Naive thymus-derived CD4-positive, alpha-beta T cell (primary cell): ENCODE measurements at regions of chr19 and their contacts with region 1.

Region 1: DNA sequence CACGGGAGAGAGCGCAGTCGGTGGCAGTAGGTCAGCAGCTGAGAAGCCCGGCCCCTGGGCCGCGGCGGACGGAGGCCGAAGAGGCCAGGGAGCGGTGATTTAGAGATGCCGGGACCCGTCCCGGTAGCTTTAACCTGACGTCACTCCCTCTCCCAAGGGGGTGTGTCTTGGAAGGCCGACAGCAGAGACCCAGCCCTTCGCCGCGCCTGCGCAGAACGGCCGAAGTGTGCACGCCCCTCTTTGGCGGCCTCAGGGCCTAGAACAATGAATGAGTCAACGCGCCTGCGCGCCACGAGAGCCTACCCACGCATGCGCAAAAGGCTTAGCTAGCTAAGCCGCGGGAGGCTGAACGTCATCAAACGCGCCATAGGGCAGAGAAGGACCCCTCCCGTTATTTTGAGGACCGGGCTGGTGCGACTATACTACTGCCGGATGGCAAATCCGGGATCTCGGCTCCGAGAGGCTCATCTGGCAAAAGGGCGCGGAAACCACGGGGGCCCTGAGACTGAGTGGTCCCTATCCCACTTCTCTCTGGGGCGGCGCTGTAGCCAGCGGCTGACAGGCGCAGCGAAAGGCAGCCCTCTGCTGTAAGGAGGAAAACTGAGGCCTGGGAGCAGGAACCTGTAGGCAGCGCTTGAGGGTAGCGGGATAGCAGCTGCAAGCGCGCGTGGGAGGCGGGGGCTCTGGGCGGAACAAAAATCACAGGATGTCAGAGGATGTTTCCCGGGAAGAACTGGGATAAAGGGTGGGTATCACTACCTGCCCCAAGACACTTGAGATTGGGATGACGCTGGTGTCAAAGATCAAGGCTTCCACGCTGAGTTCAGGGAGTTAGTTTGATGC is at the starts of genes IRGQ and ZNF576:
- DNase-seq: peak; percentile 98 to 100 (median 99)
- ATAC-seq: peak; percentile 88
- H3K4me3 ChIP-seq: peak within 1 kb of the TSS; percentile 81
- H3K4me3 Mint-ChIP-seq: peak within 1 kb of the TSS; percentile 84 to 98 (median 95)
- H3K27ac ChIP-seq: peak within 1 kb of the TSS; percentile 95
- H3K27ac Mint-ChIP-seq: peak within 1 kb of the TSS; percentile 98 to 100 (median 100)
- H3K4me1 ChIP-seq: peaks cover 16 to 28% of the 10 kb centered on the region in 2 donors
- H3K4me1 Mint-ChIP-seq: peaks cover 27 to 47% (median 37%) of the 10 kb centered on the region in 7 donors
- H3K27me3 ChIP-seq: no peaks in the 10 kb centered on the region
- H3K27me3 Mint-ChIP-seq: peaks cover 0 to 4% (median 0%) of the 10 kb centered on the region in 5 donors
- total RNA-seq, gene IRGQ: 13.5 to 43.8 (median 18.9) TPM
- total RNA-seq, gene ZNF576: 9.4 to 20.6 (median 19.5) TPM

Region 2: GRCh38 chr19:43463381-43464136 is 132.7 kb before region 1 on chr19:
- CTCF ChIA-PET with region 1: interaction called, 8 read pairs
- POLR2A ChIA-PET with region 1: interaction called, 4 read pairs
- intact Hi-C with region 1: loop called (anchors 1 to 5 kb)
- DNase-seq: peak; percentile 94 to 100 (median 99)
- ATAC-seq: peak; percentile 92
- H3K4me3 ChIP-seq: peak overlapping the region; percentile 92
- H3K4me3 Mint-ChIP-seq: peak overlapping the region; percentile 87 to 99 (median 94)
- H3K27ac ChIP-seq: peak overlapping the region; percentile 92
- H3K27ac Mint-ChIP-seq: peak overlapping the region; percentile 89 to 100 (median 99)
- H3K4me1 ChIP-seq: peaks cover 8 to 19% of the 10 kb centered on the region in 2 donors
- H3K4me1 Mint-ChIP-seq: peaks cover 24 to 67% (median 51%) of the 10 kb centered on the region in 7 donors
- H3K27me3 ChIP-seq: no peaks in the 10 kb centered on the region
- H3K27me3 Mint-ChIP-seq: peaks cover 0 to 2% (median 0%) of the 10 kb centered on the region in 5 donors

Region 3: DNA sequence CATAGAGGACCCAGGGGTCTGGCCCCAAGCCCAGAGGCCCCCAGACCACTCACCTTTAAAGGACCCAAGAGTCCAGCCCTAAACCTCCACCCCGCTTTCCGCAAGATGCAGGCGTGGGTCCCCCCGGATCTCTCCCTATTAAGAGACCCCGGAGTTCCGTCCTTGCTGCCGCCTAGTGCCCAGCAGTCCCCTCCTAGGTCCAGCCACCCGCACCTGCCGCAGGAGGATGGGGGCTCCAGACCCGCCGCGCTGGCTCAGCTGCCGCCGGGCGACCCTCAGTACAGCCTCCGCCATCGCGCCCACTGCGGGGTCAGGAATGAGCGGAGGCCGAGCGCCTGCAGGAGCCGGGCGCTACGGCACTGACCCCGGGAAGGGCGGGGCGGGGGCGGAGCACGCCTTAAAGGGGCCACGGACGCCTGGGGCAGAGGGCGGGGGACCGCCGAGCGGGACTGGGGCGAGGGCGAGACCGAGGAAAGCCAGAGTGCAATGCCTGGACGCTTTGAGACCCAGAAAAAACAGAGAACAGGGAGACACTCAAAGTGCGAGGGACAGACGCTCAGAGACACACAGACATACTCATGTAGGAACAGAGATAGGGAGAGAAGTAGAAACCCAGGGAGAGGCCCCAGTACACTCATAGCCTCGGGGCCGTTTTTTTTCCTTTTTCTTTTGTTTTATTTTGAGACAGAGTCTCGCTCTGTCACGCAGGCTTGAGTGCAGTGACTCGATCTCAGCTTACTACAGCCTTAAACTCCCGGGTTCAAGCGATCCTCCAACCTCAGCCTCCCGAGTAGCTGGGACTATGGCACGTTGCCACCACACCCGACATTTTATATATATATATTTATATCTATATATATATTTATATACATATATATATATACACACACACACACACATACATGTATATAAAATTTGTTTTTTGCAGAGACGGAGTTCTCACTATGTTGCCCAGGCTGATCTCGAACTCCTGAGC is 69.0 kb before region 1 on chr19 and contains the start of gene ETHE1:
- CTCF ChIA-PET with region 1: interaction called, 6 read pairs
- POLR2A ChIA-PET with region 1: no interaction called
- intact Hi-C with region 1: loop called in 1 of 2 experiments (anchors 1 kb)
- DNase-seq: peak; percentile 39 to 86 (median 50)
- ATAC-seq: peak; percentile 86
- H3K4me3 ChIP-seq: peak within 1 kb of the TSS; percentile 75
- H3K4me3 Mint-ChIP-seq: peak within 1 kb of the TSS; percentile 78 to 94 (median 84)
- H3K27ac ChIP-seq: peak within 1 kb of the TSS; percentile 81
- H3K27ac Mint-ChIP-seq: peak within 1 kb of the TSS; percentile 75 to 96 (median 86)
- H3K4me1 ChIP-seq: peaks cover 15 to 24% of the 10 kb centered on the region in 2 donors
- H3K4me1 Mint-ChIP-seq: peaks cover 18 to 38% (median 25%) of the 10 kb centered on the region in 7 donors
- H3K27me3 ChIP-seq: no peaks in the 10 kb centered on the region
- H3K27me3 Mint-ChIP-seq: no peaks in the 10 kb centered on the region
- total RNA-seq, gene ETHE1: 20.3 to 58.6 (median 23.9) TPM

Region 4: GRCh38 chr19:43562698-43563241 is 33.5 kb before region 1 on chr19:
- CTCF ChIA-PET with region 1: interaction called, 122 read pairs
- POLR2A ChIA-PET with region 1: interaction called, 46 read pairs
- intact Hi-C with region 1: loop called in 1 of 2 experiments (anchors 1 kb)
- DNase-seq: peak; percentile 43 to 83 (median 75)
- ATAC-seq: peak; percentile 91
- H3K4me3 ChIP-seq: peak overlapping the region; percentile 32
- H3K4me3 Mint-ChIP-seq: peak overlapping the region; percentile 63 to 97 (median 87)
- H3K27ac ChIP-seq: peak overlapping the region; percentile 79
- H3K27ac Mint-ChIP-seq: peak overlapping the region; percentile 75 to 99 (median 96)
- H3K4me1 ChIP-seq: peaks cover 31 to 40% of the 10 kb centered on the region in 2 donors
- H3K4me1 Mint-ChIP-seq: peaks cover 33 to 65% (median 63%) of the 10 kb centered on the region in 7 donors
- H3K27me3 ChIP-seq: no peaks in the 10 kb centered on the region
- H3K27me3 Mint-ChIP-seq: no peaks in the 10 kb centered on the region

Region 5: DNA sequence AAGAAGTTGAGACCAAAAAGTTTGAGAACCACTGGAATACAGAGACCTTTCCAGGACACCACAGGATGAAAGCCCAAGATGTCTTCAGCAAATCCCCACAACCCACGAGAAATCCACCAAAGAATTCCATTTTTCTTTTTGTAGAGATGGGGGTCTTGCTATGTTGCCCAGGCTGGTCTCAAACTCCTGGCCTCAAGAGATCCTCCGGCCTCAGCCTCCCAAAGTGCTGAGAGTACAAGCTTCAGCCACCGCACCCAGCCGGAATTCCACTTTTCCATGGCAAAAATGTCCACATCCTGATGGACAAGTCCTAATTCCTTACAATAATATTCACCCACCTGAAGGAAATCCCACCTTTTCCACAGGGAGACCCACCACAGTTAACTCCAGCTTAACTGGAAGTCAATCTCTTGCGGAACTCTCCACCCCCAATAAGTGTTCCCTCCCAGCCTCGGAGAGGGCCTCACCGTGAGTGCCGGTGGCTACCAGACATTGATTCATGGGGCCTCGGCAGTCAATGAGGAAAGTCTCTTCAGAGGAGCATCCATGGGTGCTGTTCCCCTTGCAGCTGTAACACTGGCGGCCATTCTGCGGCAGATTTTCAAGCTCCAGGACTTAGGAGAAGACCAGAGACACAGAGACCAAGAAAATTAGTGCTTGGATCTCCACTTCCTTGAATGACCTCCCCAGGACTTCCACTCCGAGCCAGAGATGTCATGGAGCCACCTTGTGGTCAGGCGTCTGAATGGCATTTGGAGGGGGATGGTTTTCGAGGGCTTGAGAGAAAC is 55.7 kb after region 1 on chr19:
- CTCF ChIA-PET with region 1: no interaction called
- POLR2A ChIA-PET with region 1: no interaction called
- intact Hi-C with region 1: loop called in 1 of 2 experiments (anchors 1 kb)
- DNase-seq: peak in 2 of 9 donors; percentile 28 to 37
- ATAC-seq: peak; percentile 48
- H3K4me3 ChIP-seq: no peak overlapping the region
- H3K4me3 Mint-ChIP-seq: no peak overlapping the region
- H3K27ac ChIP-seq: no peak overlapping the region
- H3K27ac Mint-ChIP-seq: peak overlapping the region in 1 of 9 donors; percentile 9
- H3K4me1 ChIP-seq: no peaks in the 10 kb centered on the region
- H3K4me1 Mint-ChIP-seq: peaks cover 0 to 5% (median 0%) of the 10 kb centered on the region in 7 donors
- H3K27me3 ChIP-seq: no peaks in the 10 kb centered on the region
- H3K27me3 Mint-ChIP-seq: no peaks in the 10 kb centered on the region

Region 6: DNA sequence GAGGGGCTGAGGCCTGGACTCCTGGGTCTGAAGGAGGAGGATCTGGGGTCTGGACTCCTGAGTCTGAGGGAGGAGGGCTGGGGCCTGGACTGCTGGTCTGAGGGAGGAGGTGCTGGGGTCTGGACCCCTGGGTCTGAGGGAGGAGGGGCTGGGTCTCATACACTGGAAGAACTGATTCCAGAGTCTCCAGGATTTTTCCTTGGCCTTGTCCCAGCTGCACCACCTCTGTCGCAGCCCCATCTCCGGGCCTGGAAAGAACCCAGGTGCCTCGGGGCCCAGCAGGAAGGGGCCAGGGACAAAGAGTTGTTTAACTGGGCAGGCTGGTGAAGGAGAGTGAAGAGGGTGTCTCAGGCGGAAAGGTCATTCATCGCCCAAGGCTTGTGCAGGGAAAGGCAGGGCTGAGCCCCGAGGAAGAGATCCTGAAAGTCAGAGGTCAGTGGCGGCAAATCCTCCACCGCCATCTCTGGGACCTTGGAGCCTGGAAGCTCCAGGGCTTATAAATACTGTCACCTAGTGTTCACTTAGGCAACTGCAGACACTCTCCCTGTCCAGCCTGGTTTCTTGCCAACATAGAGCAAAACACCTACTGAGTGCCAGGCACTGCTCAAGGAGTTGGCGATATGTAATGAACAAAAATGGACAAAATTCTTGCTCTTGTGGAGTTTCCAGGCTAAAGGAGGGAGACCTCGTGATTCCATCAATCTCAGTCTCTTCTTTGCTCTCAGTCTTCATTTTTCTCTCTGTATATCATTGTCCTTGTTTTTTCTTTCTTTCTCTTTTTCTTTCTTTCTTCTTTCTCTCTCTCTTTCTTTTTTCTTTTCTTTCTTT is 189.0 kb after region 1 on chr19:
- CTCF ChIA-PET with region 1: interaction called, 3 read pairs
- POLR2A ChIA-PET with region 1: no interaction called
- intact Hi-C with region 1: loop called in 1 of 2 experiments (anchors 2 kb)
- DNase-seq: peak in 8 of 9 donors; percentile 29 to 68 (median 56)
- ATAC-seq: peak; percentile 75
- H3K4me3 ChIP-seq: peak overlapping the region; percentile 12
- H3K4me3 Mint-ChIP-seq: peak overlapping the region; percentile 43 to 85 (median 70)
- H3K27ac ChIP-seq: peak overlapping the region; percentile 72
- H3K27ac Mint-ChIP-seq: peak overlapping the region; percentile 87 to 98 (median 95)
- H3K4me1 ChIP-seq: peaks cover 21 to 30% of the 10 kb centered on the region in 2 donors
- H3K4me1 Mint-ChIP-seq: peaks cover 27 to 49% (median 40%) of the 10 kb centered on the region in 7 donors
- H3K27me3 ChIP-seq: no peaks in the 10 kb centered on the region
- H3K27me3 Mint-ChIP-seq: peaks cover 0 to 6% (median 6%) of the 10 kb centered on the region in 5 donors